B cell (primary cell): ENCODE measurements at regions of chr1 and their contacts with region 1.

Region 1: GRCh38 chr1:43171876-43172526 is at the starts of genes CFAP57 and EBNA1BP2:
- DNase-seq: peak; percentile 97
- ATAC-seq: peak; percentile 73
- H3K4me3 ChIP-seq: peak within 1 kb of the TSS; percentile 75 to 96 (median 82)
- H3K4me3 Mint-ChIP-seq: peak within 1 kb of the TSS; percentile 96
- H3K27ac ChIP-seq: peak within 1 kb of the TSS; percentile 31 to 72
- H3K27ac Mint-ChIP-seq: peak within 1 kb of the TSS; percentile 93
- H3K4me1 ChIP-seq: peaks cover 7 to 12% of the 10 kb centered on the region in 2 donors
- H3K4me1 Mint-ChIP-seq: peaks cover 27% of the 10 kb centered on the region
- H3K27me3 ChIP-seq: peaks cover 0 to 18% (median 13%) of the 10 kb centered on the region in 4 experiments
- H3K27me3 Mint-ChIP-seq: peaks cover 20% of the 10 kb centered on the region
- CTCF ChIP-seq: no peak
- total RNA-seq, gene CFAP57: 0.15 and 0.44 TPM in 2 replicates
- total RNA-seq, gene EBNA1BP2: 25.9 and 27.4 TPM in 2 replicates

Region 2: DNA sequence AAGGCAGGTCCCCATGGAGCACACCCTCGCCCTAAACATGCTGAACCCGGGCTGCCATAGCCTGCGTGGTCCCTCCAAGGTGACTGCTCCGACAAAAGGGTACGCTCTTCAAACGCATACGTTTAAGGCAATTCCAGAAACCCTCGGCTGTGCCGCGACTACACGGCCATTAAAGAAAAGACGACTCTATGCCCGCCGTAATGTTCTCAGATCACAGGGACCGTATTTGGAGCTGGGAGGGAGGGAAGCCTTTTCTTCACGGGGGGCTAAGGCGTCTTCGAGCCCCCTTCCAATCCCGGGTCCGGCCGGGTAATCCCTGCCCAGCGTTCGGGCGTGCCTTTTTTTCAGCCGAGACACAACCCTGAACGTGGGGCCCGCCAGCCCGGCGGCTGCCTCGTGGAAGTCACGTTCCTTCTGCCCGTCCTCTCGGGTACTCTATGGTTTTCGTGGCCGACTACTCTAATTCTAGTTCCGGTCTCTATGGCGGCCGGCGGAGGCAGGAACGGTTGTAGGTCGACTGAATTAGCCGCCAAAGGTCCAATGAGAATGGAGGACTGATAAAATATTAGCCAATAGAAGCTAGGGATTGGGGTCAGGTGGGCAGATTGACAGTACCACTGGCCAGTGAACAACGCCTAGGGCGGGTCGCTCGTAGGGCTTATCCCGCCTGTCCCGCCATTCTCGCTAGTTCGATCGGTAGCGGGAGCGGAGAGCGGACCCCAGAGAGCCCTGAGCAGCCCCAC is 490.1 kb before region 1 on chr1 and contains the start of gene YBX1:
- CTCF ChIA-PET with region 1: no interaction called
- POLR2A ChIA-PET with region 1: no interaction called
- intact Hi-C with region 1: loop called (anchors 1 kb)
- DNase-seq: peak; percentile 98
- ATAC-seq: peak; percentile 86
- H3K4me3 ChIP-seq: peak within 1 kb of the TSS; percentile 64 to 94 (median 82)
- H3K4me3 Mint-ChIP-seq: peak within 1 kb of the TSS; percentile 99
- H3K27ac ChIP-seq: peak within 1 kb of the TSS; percentile 80 to 97
- H3K27ac Mint-ChIP-seq: peak within 1 kb of the TSS; percentile 100
- H3K4me1 ChIP-seq: peaks cover 48 to 50% of the 10 kb centered on the region in 2 donors
- H3K4me1 Mint-ChIP-seq: peaks cover 54% of the 10 kb centered on the region
- H3K27me3 ChIP-seq: no peaks in the 10 kb centered on the region
- H3K27me3 Mint-ChIP-seq: no peaks in the 10 kb centered on the region
- CTCF ChIP-seq: no peak
- total RNA-seq, gene YBX1: 314 and 345 TPM in 2 replicates

Region 3: DNA sequence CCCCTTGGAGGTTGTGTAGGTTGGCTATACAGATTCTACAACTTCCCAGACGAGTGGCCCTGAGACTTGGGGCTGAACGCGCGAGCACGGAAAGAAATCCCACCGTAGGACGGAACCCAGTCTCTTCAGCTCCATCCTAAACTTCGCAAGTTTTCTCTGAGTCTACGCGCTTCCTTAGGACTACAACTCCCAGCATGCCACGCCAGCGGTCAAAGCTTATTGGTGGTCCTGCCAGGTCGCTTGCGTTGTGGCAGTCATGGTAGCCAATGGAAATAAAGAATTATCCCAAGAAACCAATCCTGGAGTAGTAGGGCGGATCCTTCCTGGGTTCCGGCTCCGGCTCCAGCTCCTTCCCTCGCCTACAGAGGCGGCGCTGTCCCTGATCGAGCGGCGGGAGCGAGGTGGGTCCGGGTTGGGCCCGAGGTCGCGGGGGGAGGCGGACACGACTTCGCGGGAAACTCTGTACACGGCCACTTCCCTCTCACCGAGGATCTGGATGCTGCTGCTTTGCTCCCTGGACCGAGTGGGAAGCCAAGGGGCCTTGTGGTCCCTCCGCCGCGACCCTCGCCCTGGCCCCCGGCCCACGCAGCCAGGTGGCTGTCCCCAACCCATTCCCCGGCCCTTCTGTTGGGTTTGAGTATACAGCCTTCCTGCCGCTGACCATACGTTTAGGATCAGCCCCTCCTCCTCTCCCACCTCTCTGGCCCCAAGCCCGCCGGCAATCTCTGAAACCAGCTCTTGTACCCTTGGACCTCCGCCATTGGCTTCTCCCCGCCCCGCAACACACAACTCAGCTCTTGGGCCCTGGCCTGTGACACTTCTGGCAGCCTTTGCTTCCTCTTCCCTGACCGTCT is 325.5 kb before region 1 on chr1 and contains the start of gene ZNF691:
- CTCF ChIA-PET with region 1: no interaction called
- POLR2A ChIA-PET with region 1: no interaction called
- intact Hi-C with region 1: loop called (anchors 1 kb)
- DNase-seq: peak; percentile 93
- ATAC-seq: peak; percentile 98
- H3K4me3 ChIP-seq: peak within 1 kb of the TSS; percentile 80 to 92 (median 90)
- H3K4me3 Mint-ChIP-seq: peak within 1 kb of the TSS; percentile 95
- H3K27ac ChIP-seq: peak within 1 kb of the TSS; percentile 41 to 76
- H3K27ac Mint-ChIP-seq: peak within 1 kb of the TSS; percentile 91
- H3K4me1 ChIP-seq: peaks cover 17 to 24% of the 10 kb centered on the region in 2 donors
- H3K4me1 Mint-ChIP-seq: peaks cover 46% of the 10 kb centered on the region
- H3K27me3 ChIP-seq: no peaks in the 10 kb centered on the region
- H3K27me3 Mint-ChIP-seq: no peaks in the 10 kb centered on the region
- CTCF ChIP-seq: peak; percentile 16
- total RNA-seq, gene ZNF691: 17.1 and 18.4 TPM in 2 replicates

Region 4: GRCh38 chr1:43227143-43227764 is 55.3 kb after region 1 on chr1:
- CTCF ChIA-PET with region 1: interaction called, 10 read pairs
- POLR2A ChIA-PET with region 1: no interaction called
- intact Hi-C with region 1: no loop called
- DNase-seq: peak; percentile 87
- ATAC-seq: peak; percentile 96
- H3K4me3 ChIP-seq: no peak overlapping the region
- H3K4me3 Mint-ChIP-seq: no peak overlapping the region
- H3K27ac ChIP-seq: no peak overlapping the region
- H3K27ac Mint-ChIP-seq: no peak overlapping the region
- H3K4me1 ChIP-seq: peaks cover 4 to 9% of the 10 kb centered on the region in 2 donors
- H3K4me1 Mint-ChIP-seq: peaks cover 10% of the 10 kb centered on the region
- H3K27me3 ChIP-seq: no peaks in the 10 kb centered on the region
- H3K27me3 Mint-ChIP-seq: no peaks in the 10 kb centered on the region
- CTCF ChIP-seq: peak; percentile 95

Region 5: GRCh38 chr1:43946236-43947060 is 774.4 kb after region 1 on chr1 and contains the start of gene IPO13:
- CTCF ChIA-PET with region 1: no interaction called
- POLR2A ChIA-PET with region 1: no interaction called
- intact Hi-C with region 1: loop called (anchors 1 kb)
- DNase-seq: peak; percentile 98
- ATAC-seq: peak; percentile 94
- H3K4me3 ChIP-seq: peak within 1 kb of the TSS; percentile 64 to 90 (median 78)
- H3K4me3 Mint-ChIP-seq: peak within 1 kb of the TSS; percentile 93
- H3K27ac ChIP-seq: peak within 1 kb of the TSS; percentile 95
- H3K27ac Mint-ChIP-seq: peak within 1 kb of the TSS; percentile 98
- H3K4me1 ChIP-seq: peaks cover 15 to 25% of the 10 kb centered on the region in 2 donors
- H3K4me1 Mint-ChIP-seq: peaks cover 39% of the 10 kb centered on the region
- H3K27me3 ChIP-seq: no peaks in the 10 kb centered on the region
- H3K27me3 Mint-ChIP-seq: no peaks in the 10 kb centered on the region
- CTCF ChIP-seq: peak; percentile 71
- total RNA-seq, gene IPO13: 17.1 and 19.7 TPM in 2 replicates